CD4-positive, alpha-beta memory T cell (primary cell): ENCODE measurements at regions of chr11 and their contacts with region 1.

Region 1: GRCh38 chr11:60985991-60986915 is 14.8 kb downstream of the CD6 start:
- DNase-seq: peak; percentile 92 to 99 (median 97)
- H3K4me3 ChIP-seq: peak overlapping the region in 1 of 2 donors; percentile 39
- H3K4me3 Mint-ChIP-seq: peak overlapping the region; percentile 61 to 87 (median 78)
- H3K27ac ChIP-seq: peak overlapping the region; percentile 92
- H3K27ac Mint-ChIP-seq: peak overlapping the region; percentile 88 to 100 (median 97)
- H3K4me1 ChIP-seq: peaks cover 94% of the 10 kb centered on the region
- H3K4me1 Mint-ChIP-seq: peaks cover 69 to 96% (median 86%) of the 10 kb centered on the region in 4 donors
- H3K27me3 ChIP-seq: no peaks in the 10 kb centered on the region
- H3K27me3 Mint-ChIP-seq: no peaks in the 10 kb centered on the region

Region 2: GRCh38 chr11:60924110-60924905 is 61.9 kb before region 1 on chr11 and contains the start of gene TMEM132A:
- CTCF ChIA-PET with region 1: no interaction called
- POLR2A ChIA-PET with region 1: no interaction called
- intact Hi-C with region 1: no loop called
- DNase-seq: peak in 1 of 5 donors; percentile 17
- H3K4me3 ChIP-seq: peak within 1 kb of the TSS in 1 of 2 donors; percentile 32
- H3K4me3 Mint-ChIP-seq: peak within 1 kb of the TSS; percentile 35 to 82 (median 70)
- H3K27ac ChIP-seq: no peak within 1 kb of the TSS
- H3K27ac Mint-ChIP-seq: peak within 1 kb of the TSS in 2 of 7 donors; percentile 47 to 59
- H3K4me1 ChIP-seq: peaks cover 20% of the 10 kb centered on the region
- H3K4me1 Mint-ChIP-seq: peaks cover 5 to 23% (median 13%) of the 10 kb centered on the region in 4 donors
- H3K27me3 ChIP-seq: peaks cover 11% of the 10 kb centered on the region
- H3K27me3 Mint-ChIP-seq: peaks cover 4 to 12% of the 10 kb centered on the region in 2 donors
- total RNA-seq, gene TMEM132A: 0.78 to 0.93 TPM

Region 3: DNA sequence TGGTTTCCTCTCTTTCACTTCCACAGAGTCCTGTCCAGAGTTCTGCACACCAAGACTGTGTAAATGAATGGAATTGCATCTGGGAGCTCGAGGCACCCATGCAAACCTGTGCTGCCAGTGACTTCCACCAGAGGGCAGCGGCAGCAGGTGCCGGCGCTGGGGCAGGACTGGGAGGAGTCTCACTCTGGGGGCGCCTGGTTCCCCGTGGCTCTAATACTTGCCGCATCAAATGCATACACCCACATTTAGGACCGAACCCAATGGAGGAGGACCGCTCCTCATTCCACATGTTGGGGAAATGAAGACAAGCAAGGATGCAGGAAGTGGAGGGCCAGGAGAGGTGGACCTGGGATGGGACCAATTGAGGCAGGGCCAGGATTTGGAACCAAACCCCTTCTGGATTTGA is 15.9 kb before region 1 on chr11:
- CTCF ChIA-PET with region 1: interaction called, 4 read pairs
- POLR2A ChIA-PET with region 1: no interaction called
- intact Hi-C with region 1: loop called (anchors 1 kb)
- DNase-seq: peak; percentile 78 to 82 (median 80)
- H3K4me3 ChIP-seq: peak overlapping the region; percentile 38 to 92
- H3K4me3 Mint-ChIP-seq: peak overlapping the region; percentile 93 to 98 (median 96)
- H3K27ac ChIP-seq: peak overlapping the region; percentile 92
- H3K27ac Mint-ChIP-seq: peak overlapping the region; percentile 88 to 98 (median 96)
- H3K4me1 ChIP-seq: peaks cover 23% of the 10 kb centered on the region
- H3K4me1 Mint-ChIP-seq: peaks cover 18 to 38% (median 24%) of the 10 kb centered on the region in 4 donors
- H3K27me3 ChIP-seq: no peaks in the 10 kb centered on the region
- H3K27me3 Mint-ChIP-seq: peaks cover 0 to 1% of the 10 kb centered on the region in 2 donors

Region 4: GRCh38 chr11:61021661-61022212 is 35.5 kb after region 1 on chr11:
- CTCF ChIA-PET with region 1: interaction called, 3 read pairs
- POLR2A ChIA-PET with region 1: interaction called, 73 read pairs
- intact Hi-C with region 1: loop called (anchors 1 kb)
- DNase-seq: peak; percentile 92 to 99 (median 94)
- H3K4me3 ChIP-seq: peak overlapping the region; percentile 40 to 41
- H3K4me3 Mint-ChIP-seq: peak overlapping the region; percentile 60 to 81 (median 72)
- H3K27ac ChIP-seq: peak overlapping the region; percentile 83
- H3K27ac Mint-ChIP-seq: peak overlapping the region; percentile 97 to 100 (median 99)
- H3K4me1 ChIP-seq: peaks cover 76% of the 10 kb centered on the region
- H3K4me1 Mint-ChIP-seq: peaks cover 60 to 85% (median 71%) of the 10 kb centered on the region in 4 donors
- H3K27me3 ChIP-seq: no peaks in the 10 kb centered on the region
- H3K27me3 Mint-ChIP-seq: no peaks in the 10 kb centered on the region

Region 5: GRCh38 chr11:61061081-61061826 is 75.0 kb after region 1 on chr11:
- CTCF ChIA-PET with region 1: no interaction called
- POLR2A ChIA-PET with region 1: interaction called, 22 read pairs
- intact Hi-C with region 1: no loop called
- DNase-seq: peak; percentile 60 to 97 (median 65)
- H3K4me3 ChIP-seq: peak overlapping the region; percentile 17 to 48
- H3K4me3 Mint-ChIP-seq: peak overlapping the region; percentile 72 to 93 (median 86)
- H3K27ac ChIP-seq: peak overlapping the region; percentile 69
- H3K27ac Mint-ChIP-seq: peak overlapping the region; percentile 94 to 99 (median 97)
- H3K4me1 ChIP-seq: peaks cover 75% of the 10 kb centered on the region
- H3K4me1 Mint-ChIP-seq: peaks cover 59 to 91% (median 66%) of the 10 kb centered on the region in 4 donors
- H3K27me3 ChIP-seq: no peaks in the 10 kb centered on the region
- H3K27me3 Mint-ChIP-seq: no peaks in the 10 kb centered on the region

Region 6: GRCh38 chr11:61091373-61092279 is 105.4 kb after region 1 on chr11:
- CTCF ChIA-PET with region 1: no interaction called
- POLR2A ChIA-PET with region 1: interaction called, 11 read pairs
- intact Hi-C with region 1: no loop called
- DNase-seq: peak in 1 of 5 donors; percentile 74
- H3K4me3 ChIP-seq: peak overlapping the region in 1 of 2 donors; percentile 16
- H3K4me3 Mint-ChIP-seq: peak overlapping the region; percentile 71 to 89 (median 80)
- H3K27ac ChIP-seq: peak overlapping the region; percentile 87
- H3K27ac Mint-ChIP-seq: peak overlapping the region; percentile 95 to 99 (median 97)
- H3K4me1 ChIP-seq: peaks cover 52% of the 10 kb centered on the region
- H3K4me1 Mint-ChIP-seq: peaks cover 44 to 75% (median 50%) of the 10 kb centered on the region in 4 donors
- H3K27me3 ChIP-seq: no peaks in the 10 kb centered on the region
- H3K27me3 Mint-ChIP-seq: no peaks in the 10 kb centered on the region

Region 7: GRCh38 chr11:61111786-61112517 is 125.7 kb after region 1 on chr11:
- CTCF ChIA-PET with region 1: interaction called, 7 read pairs
- POLR2A ChIA-PET with region 1: interaction called, 56 read pairs
- intact Hi-C with region 1: loop called (anchors 5 kb)
- DNase-seq: peak; percentile 64 to 87 (median 72)
- H3K4me3 ChIP-seq: peak overlapping the region in 1 of 2 donors; percentile 20
- H3K4me3 Mint-ChIP-seq: peak overlapping the region in 5 of 8 donors; percentile 37 to 83 (median 75)
- H3K27ac ChIP-seq: peak overlapping the region; percentile 100
- H3K27ac Mint-ChIP-seq: peak overlapping the region in 5 of 7 donors; percentile 78 to 98 (median 89)
- H3K4me1 ChIP-seq: peaks cover 100% of the 10 kb centered on the region
- H3K4me1 Mint-ChIP-seq: peaks cover 0 to 100% (median 82%) of the 10 kb centered on the region in 4 donors
- H3K27me3 ChIP-seq: no peaks in the 10 kb centered on the region
- H3K27me3 Mint-ChIP-seq: no peaks in the 10 kb centered on the region